ENCODE measurements at regions of chr2 and their contacts with region 1.

Region 1: DNA sequence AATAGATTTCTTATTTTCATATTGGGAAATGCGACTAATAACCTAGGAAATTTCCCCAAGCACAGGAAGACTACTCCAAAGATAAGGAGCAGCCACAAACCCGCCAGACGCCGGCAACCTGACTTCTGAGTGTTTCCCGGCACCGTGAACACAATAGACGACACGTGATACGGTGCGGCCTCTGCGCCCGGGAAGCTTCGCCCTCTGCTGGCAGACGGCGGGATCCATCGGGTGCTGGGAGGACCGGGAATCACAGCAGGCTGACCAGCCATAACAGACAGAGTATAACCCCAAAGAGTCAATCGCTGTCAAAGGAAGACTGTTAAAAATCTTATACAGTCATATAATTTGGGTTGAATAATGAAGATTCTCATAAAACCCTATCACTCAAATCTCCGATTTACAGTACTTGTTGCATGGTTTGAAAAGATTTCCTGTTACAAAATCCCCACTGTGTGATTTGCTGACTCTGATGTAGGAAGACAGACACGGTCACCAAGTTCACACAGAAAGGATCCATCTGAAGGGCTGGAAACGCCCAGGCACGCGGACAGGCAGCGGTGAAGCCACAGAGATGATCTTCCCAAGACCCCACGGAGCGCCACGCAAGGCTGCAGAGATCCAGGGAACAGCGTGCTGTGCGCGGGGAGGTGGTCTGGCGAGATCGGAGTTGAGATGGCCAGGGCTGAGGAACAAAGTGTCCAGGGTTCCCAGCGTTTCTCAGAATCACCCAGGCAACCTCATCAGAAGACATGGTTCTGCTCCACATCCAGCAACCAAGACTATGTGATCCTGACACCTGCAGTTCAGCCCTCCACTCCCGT is 73.8 kb downstream of the EIPR1 start:
- DNase-seq: peak; percentile 83 to 92
- H3K4me3 ChIP-seq: no peak overlapping the region
- H3K4me3 Mint-ChIP-seq: no peak overlapping the region
- H3K27ac Mint-ChIP-seq: no peak overlapping the region
- H3K4me1 ChIP-seq: no peaks in the 10 kb centered on the region
- H3K4me1 Mint-ChIP-seq: no peaks in the 10 kb centered on the region
- H3K27me3 ChIP-seq: no peaks in the 10 kb centered on the region
- H3K27me3 Mint-ChIP-seq: no peaks in the 10 kb centered on the region
- CTCF ChIP-seq: peak; percentile 95 to 97

Region 2: GRCh38 chr2:2843969-2844548 is 459.7 kb before region 1 on chr2:
- CTCF ChIA-PET with region 1: no interaction called
- POLR2A ChIA-PET with region 1: no interaction called
- intact Hi-C with region 1: loop called (anchors 5 kb)
- DNase-seq: peak in 1 of 2 experiments; percentile 23
- H3K4me3 ChIP-seq: no peak overlapping the region
- H3K4me3 Mint-ChIP-seq: no peak overlapping the region
- H3K27ac Mint-ChIP-seq: no peak overlapping the region
- H3K4me1 ChIP-seq: no peaks in the 10 kb centered on the region
- H3K4me1 Mint-ChIP-seq: no peaks in the 10 kb centered on the region
- H3K27me3 ChIP-seq: no peaks in the 10 kb centered on the region
- H3K27me3 Mint-ChIP-seq: peaks cover 5% of the 10 kb centered on the region
- CTCF ChIP-seq: peak; percentile 15 to 23

Region 3: DNA sequence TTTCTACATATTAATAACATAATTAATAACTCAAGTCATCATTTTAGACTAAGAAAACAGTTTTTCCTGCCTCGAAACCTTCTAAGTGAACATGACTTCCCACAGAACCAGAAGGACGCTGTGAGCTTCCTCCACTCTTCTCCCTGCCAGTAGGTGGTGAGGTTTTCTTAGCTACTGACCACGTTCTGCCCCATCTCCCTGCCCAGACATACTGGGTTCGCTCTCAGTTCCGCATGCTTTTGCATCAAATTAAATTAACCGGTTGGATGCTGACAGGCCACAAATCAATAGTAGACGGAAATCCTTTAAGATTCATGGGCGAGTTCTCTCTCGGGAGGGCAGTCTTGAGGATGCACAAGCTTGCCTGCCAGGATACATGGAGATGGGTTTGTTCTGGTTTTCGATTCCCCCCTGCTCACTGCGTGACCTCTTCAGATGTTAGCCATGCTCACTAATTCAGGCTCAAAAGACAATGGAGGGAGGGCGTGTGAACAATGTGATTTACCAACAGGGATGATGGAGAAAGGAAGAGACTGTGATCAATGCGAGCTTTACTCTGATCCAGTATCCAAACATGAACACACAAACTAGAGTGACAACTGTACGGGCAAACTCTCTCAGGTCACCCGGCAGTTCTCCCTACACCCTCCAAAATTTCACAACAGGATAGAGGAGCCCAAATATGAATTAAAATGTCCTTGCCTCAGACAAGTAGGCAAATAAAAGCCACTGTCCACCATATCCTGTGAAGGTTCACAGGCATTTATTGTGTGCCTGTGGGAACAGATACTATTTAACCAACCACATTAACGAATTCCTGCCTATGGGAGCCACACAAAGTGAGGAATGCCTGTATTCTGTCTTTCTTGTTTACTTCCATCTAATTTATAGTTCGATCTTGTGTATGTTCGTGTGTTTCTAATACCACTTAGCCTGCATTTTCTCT is 301.9 kb before region 1 on chr2:
- CTCF ChIA-PET with region 1: no interaction called
- POLR2A ChIA-PET with region 1: no interaction called
- intact Hi-C with region 1: loop called (anchors 1 kb)
- DNase-seq: peak in 1 of 2 experiments; percentile 25
- H3K4me3 ChIP-seq: no peak overlapping the region
- H3K4me3 Mint-ChIP-seq: no peak overlapping the region
- H3K27ac Mint-ChIP-seq: no peak overlapping the region
- H3K4me1 ChIP-seq: no peaks in the 10 kb centered on the region
- H3K4me1 Mint-ChIP-seq: no peaks in the 10 kb centered on the region
- H3K27me3 ChIP-seq: no peaks in the 10 kb centered on the region
- H3K27me3 Mint-ChIP-seq: peaks cover 24% of the 10 kb centered on the region
- CTCF ChIP-seq: peak in 1 of 2 experiments; percentile 41

Region 4: DNA sequence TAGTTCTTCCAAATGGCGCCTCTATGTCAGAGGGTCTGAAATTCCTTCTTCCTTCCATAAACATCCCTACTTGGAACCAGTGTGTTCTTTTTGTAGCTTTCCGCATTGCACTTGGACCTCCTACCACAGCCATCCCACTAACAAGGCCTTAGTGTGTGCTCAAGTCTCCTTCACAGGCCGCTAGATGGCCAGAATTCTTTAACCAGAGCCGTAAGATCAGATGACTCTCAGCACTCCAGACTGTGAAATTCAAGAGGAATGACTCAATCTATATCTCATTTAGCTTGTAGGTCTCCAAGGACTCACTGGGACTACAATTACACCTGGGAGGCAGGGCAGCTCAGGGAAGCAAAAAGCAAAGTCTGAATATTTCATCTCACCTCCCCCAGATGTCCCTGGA is 225.1 kb before region 1 on chr2:
- CTCF ChIA-PET with region 1: no interaction called
- POLR2A ChIA-PET with region 1: no interaction called
- intact Hi-C with region 1: loop called (anchors 2 kb)
- DNase-seq: no peak
- H3K4me3 ChIP-seq: no peak overlapping the region
- H3K4me3 Mint-ChIP-seq: no peak overlapping the region
- H3K27ac Mint-ChIP-seq: no peak overlapping the region
- H3K4me1 ChIP-seq: no peaks in the 10 kb centered on the region
- H3K4me1 Mint-ChIP-seq: no peaks in the 10 kb centered on the region
- H3K27me3 ChIP-seq: no peaks in the 10 kb centered on the region
- H3K27me3 Mint-ChIP-seq: peaks cover 30% of the 10 kb centered on the region
- CTCF ChIP-seq: no peak

Region 5: DNA sequence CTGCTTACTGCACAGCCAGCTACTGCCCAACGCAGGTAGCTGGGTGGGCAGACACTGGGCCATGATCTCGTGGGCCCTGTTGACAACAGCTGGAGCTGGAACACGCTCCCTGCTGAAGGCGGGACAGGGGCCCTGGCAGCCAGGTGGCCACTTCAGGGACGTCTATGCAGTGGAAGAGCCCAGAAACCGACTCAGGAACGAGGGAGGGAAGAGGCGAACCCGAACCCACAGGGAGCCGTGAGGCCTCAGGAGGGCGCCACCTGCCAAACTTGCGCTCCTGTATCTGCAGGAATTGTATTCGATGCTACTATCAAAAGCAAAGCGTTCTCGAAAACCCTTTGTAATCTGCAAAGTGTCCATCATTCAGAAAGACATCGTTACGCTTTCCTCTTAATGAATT is 124.6 kb before region 1 on chr2:
- CTCF ChIA-PET with region 1: no interaction called
- POLR2A ChIA-PET with region 1: no interaction called
- intact Hi-C with region 1: loop called (anchors 1 kb)
- DNase-seq: no peak
- H3K4me3 ChIP-seq: no peak overlapping the region
- H3K4me3 Mint-ChIP-seq: no peak overlapping the region
- H3K27ac Mint-ChIP-seq: no peak overlapping the region
- H3K4me1 ChIP-seq: no peaks in the 10 kb centered on the region
- H3K4me1 Mint-ChIP-seq: no peaks in the 10 kb centered on the region
- H3K27me3 ChIP-seq: no peaks in the 10 kb centered on the region
- H3K27me3 Mint-ChIP-seq: no peaks in the 10 kb centered on the region
- CTCF ChIP-seq: peak in 1 of 2 experiments; percentile 26

Region 6: GRCh38 chr2:3200420-3200939 is 103.3 kb before region 1 on chr2:
- CTCF ChIA-PET with region 1: no interaction called
- POLR2A ChIA-PET with region 1: no interaction called
- intact Hi-C with region 1: loop called (anchors 10 kb)
- DNase-seq: no peak
- H3K4me3 ChIP-seq: no peak overlapping the region
- H3K4me3 Mint-ChIP-seq: no peak overlapping the region
- H3K27ac Mint-ChIP-seq: no peak overlapping the region
- H3K4me1 ChIP-seq: peaks cover 6% of the 10 kb centered on the region; the same call in 1 of the 2 replicates
- H3K4me1 Mint-ChIP-seq: no peaks in the 10 kb centered on the region
- H3K27me3 ChIP-seq: no peaks in the 10 kb centered on the region
- H3K27me3 Mint-ChIP-seq: no peaks in the 10 kb centered on the region
- CTCF ChIP-seq: no peak